GM12878 (cell line): ENCODE measurements at regions of chr3 and their contacts with region 1.

Region 1: DNA sequence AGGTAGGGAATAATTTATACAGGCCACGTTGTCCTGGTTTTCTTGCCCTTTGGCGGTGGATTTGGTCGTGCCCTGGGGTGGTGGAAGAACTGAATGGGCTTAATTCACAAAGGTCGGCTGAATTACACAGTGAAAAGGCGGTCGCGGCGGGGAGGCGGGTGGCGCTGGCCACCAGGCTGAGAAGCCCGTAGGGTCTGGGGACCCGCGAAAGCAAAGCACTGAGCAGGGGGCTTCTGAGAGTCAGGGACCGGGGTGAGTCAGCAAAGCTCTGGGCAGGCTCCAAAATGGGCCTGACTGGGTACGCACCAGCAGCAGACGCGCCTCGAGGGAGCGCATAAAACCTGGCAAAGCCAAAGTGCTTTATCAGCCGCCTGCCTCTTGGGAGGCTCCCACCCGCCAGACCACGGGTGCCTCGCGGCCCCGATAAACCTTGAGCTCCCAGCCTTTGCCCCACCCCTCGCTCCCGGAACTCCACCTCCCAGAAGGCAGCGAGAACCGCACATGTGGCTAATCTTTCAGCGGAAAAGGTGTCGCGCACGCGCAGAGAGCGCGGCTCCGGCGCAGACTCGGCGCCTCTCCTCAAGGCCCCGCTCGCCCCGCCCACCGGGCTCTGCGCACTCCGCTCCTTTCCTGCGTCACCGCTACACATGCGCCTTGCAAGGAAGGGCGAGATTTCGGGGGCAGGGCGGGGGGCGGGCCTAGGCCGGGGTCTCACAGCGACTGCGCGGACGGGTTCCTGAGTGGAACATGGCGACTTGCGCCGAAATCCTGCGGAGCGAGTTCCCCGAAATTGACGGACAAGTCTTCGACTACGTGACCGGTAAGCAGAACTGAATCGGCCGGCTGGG is at the start of gene ABCF3:
- DNase-seq: peak; percentile 97
- ATAC-seq: peak; percentile 98
- H3K4me3 ChIP-seq: peak within 1 kb of the TSS; percentile 93
- H3K27ac ChIP-seq: peak within 1 kb of the TSS; percentile 73
- H3K4me1 ChIP-seq: 0 out of 2 replicates have a peak, but pooled peaks cover 4% of the 10 kb centered on the region
- H3K27me3 ChIP-seq: no peaks in the 10 kb centered on the region
- CTCF ChIP-seq: no peak
- EP300 ChIP-seq: no peak
- POLR2A ChIP-seq: peak; percentile 89
- RAD21 ChIP-seq: no peak
- polyA plus RNA-seq, gene ABCF3: 6.1 to 8.1 TPM

Region 2: GRCh38 chr3:184135149-184135910 is 50.4 kb before region 1 on chr3 and contains the start of gene EIF2B5:
- CTCF ChIA-PET with region 1: interaction called, 3 read pairs
- POLR2A ChIA-PET with region 1: interaction called, 4 read pairs
- RAD21 ChIA-PET with region 1: no interaction called
- SMC1A ChIA-PET with region 1: no interaction called
- in situ Hi-C with region 1: no loop called
- intact Hi-C with region 1: loop called (anchors 2 kb)
- DNase-seq: peak; percentile 84
- ATAC-seq: peak; percentile 92
- H3K4me3 ChIP-seq: peak within 1 kb of the TSS; percentile 95
- H3K27ac ChIP-seq: peak within 1 kb of the TSS; percentile 84
- H3K4me1 ChIP-seq: peaks cover 4% of the 10 kb centered on the region; the same call in 1 of the 2 replicates
- H3K27me3 ChIP-seq: no peaks in the 10 kb centered on the region
- CTCF ChIP-seq: peak; percentile 25 to 36 (median 35); a peak in 4 of 6 replicates
- EP300 ChIP-seq: no peak
- POLR2A ChIP-seq: peak; percentile 96
- RAD21 ChIP-seq: no peak
- polyA plus RNA-seq, gene EIF2B5: 13.7 to 23.6 TPM

Region 3: DNA sequence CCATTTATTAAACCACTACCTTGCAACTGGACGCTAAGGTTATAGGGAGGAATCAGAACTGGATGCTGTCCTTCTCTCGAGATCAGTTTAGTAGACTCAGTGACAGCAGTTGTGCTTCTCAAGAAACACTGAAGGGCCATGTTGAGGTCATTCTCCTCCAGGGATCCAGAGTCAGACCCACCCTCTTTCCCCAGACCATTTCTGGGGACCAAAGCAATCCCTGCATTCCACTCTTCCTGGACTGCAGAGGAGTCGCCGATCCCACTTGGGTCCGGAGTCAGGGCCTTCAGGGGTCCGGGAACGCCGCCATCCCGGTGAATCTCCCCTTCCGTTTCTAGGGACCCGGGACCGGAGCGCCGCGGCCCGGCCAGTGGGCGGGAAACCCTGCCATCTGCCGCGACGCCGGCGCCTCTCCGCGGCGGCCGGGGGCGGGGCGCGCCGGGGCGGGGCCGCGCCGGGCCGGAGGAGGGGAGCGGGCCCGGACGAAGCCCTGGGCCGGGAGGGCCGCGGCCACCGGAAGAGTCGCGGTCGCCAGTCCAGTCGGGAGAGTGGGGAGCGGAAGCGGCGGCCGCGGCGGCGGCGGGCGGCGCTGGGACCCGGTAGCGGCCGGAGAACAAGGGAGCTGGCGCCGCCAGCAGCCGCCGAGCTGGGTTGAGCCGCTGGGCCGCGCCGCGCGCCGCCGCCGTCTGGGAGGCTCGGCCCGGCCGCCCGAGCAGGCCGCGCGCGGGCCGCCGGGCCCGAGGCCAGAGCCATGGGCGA is 30.6 kb before region 1 on chr3 and contains the start of gene DVL3:
- CTCF ChIA-PET with region 1: interaction called, 3 read pairs
- POLR2A ChIA-PET with region 1: interaction called, 6 read pairs
- RAD21 ChIA-PET with region 1: interaction called, 7 read pairs
- SMC1A ChIA-PET with region 1: interaction called, 3 read pairs
- in situ Hi-C with region 1: no loop called
- intact Hi-C with region 1: loop called (anchors 1 kb)
- DNase-seq: no peak
- ATAC-seq: peak; percentile 81
- H3K4me3 ChIP-seq: peak within 1 kb of the TSS; percentile 82
- H3K27ac ChIP-seq: peak within 1 kb of the TSS; percentile 35
- H3K4me1 ChIP-seq: peaks cover 4% of the 10 kb centered on the region; the same call in 1 of the 2 replicates
- H3K27me3 ChIP-seq: no peaks in the 10 kb centered on the region
- CTCF ChIP-seq: 0 out of 6 replicates have a peak, but pooled peaks of 1 of the 3 experiments have one; percentile 4
- EP300 ChIP-seq: no peak
- POLR2A ChIP-seq: peak; percentile 55; the same call in 1 of the 2 replicates
- RAD21 ChIP-seq: no peak
- polyA plus RNA-seq, gene DVL3: 2.2 to 2.4 TPM